ENCODE measurements at regions of chr10 and their contacts with region 1.

Region 1: DNA sequence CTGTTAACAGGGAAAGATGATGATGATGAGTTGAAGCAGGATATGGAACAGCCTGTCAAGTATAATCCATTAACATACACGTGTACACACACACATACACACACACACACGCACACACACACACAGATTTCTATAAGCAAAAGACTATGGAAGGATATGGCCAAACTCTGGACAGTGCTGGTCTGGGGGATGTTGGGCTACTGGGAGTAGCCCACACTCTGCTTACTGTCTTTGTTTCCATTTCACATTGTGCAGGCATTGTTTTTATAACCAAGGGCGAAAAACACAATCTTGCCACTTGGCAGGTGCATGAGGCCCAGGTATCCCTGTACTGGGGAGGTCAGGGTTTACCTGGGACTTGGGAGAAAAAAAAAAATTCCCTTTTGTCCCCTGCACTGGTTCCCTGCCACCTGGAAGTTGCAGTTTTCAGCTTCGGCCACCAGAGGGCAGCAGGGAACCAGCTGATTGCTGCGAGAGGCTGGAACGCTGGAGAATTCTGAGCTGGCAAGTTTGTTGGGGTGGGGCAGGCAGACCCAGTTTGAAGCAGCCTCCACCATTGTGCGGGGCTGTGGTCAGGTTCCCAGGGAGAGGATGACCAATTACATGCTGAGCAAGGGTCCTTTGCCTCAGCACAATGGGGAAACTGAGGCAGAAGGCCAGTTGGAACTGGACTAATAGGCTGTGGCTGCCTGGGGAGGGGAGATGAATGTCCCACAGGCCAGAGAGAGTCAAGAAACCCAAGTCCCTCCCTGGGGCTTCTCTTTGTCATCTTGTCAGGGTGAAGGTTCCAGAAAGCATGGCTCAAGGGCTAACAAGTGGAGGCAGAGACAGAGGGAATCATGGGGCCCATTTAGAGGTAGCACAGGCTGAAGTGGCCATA is 27.3 kb downstream of the PPIF start:
- DNase-seq: peak; percentile 87
- ATAC-seq: peak; percentile 52

Region 2: GRCh38 chr10:79242620-79243152 is 131.9 kb before region 1 on chr10:
- intact Hi-C with region 1: no loop called
- DNase-seq: peak; percentile 83
- ATAC-seq: peak; percentile 30

Region 3: DNA sequence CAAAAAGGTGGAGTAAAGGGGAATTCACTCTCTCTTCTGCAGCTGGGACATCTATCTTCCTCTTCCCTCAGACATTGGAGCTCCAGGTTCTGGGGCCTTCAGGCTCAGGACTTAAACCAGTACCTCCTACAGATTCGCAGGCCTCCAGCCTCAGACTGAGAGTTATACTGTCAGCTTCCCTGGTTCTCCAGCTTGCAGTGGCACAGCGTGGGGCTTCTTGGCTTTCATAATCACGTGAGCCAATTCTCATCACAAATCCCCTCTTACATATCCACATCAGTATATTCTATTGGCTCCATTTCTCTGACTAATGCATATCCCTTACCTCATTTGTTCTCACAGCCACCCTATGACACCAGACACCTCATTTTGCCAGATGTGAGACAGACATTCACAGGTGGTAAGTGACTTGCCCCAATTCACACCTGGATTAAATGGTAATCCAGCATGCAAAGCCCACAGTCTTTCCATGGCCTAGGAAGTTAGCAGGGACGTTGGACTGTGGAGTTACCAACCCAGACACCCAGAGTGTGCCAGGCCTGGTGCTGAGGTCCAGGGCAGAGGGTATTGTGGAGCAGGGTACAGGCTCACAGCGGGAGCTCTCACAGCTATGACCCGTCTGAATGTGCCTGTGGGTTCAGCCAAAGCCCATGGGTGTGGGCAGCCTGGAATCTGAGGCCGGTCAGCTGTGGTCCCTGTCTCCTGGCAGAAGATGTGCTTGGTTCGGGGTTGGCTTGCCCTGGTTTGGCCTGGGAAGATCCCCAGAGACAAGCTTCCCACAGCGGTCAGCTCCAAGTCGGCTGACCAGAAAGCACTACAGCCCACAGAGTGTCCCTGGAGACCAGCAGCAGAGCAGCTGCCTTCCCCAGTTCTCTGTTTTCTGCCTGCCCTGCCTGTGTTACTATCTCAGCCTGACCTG is 89.3 kb after region 1 on chr10:
- intact Hi-C with region 1: loop called (anchors 1 kb)
- DNase-seq: no peak
- ATAC-seq: peak; percentile 41

Region 4: DNA sequence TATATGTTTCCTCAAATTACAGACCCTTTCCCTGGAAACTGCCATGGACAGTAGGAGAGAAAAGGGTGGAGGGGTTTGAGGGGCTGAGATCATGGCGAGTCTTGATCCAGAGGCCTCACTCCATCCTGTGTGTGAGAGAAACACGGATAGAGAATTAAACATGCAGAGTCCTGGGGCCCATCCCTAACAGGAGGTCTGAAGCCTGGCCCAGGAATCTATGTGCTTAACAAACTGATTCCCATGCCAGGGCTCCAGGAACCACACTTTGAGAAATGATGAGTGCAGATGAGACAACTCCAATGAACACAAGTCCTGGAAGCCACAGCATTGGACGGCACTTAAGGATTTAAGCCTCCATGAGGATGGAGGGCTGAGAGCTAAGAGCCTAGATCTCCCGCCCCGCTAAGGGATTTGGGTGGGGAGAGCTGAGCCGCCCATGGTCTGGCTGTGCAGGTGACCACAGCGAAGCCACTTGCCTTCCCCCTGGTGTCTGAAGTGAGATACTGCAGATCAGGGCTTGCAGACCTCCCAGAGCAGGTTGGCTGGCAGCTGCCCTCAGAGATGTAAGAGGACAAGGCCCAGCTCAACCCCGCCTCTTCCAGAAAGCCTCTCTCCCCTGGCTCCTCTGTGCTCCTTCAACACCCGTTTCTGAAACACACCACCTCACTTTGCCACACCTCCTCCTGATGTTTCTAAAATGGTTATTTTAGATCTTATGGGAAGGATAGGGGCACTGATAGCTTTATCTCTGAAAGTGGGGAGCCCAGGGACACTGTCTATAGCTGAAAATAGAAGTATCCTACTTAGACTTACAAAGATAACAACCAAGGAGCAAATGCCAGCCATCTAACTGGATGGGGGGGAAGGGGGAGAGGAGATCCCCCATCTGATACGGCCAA is 113.0 kb after region 1 on chr10:
- intact Hi-C with region 1: loop called (anchors 1 kb)
- DNase-seq: peak; percentile 82
- ATAC-seq: peak; percentile 25

Region 5: GRCh38 chr10:79608505-79609375 is 234.2 kb after region 1 on chr10:
- intact Hi-C with region 1: loop called (anchors 10 kb)
- DNase-seq: no peak
- ATAC-seq: no peak

Measured in Right ventricle myocardium inferior (tissue), 1 donor.